Adrenal gland (tissue), 19 donors: ENCODE measurements at regions of chr2 and their contacts with region 1.

Region 1: GRCh38 chr2:218257390-218257981 is 3.3 kb upstream of the GPBAR1 start:
- DNase-seq: peak in 5 of 7 donors; percentile 40 to 73 (median 57)
- H3K4me3 ChIP-seq: no peak overlapping the region
- H3K27ac ChIP-seq: peak overlapping the region in 2 of 5 donors; percentile 7 to 41
- H3K4me1 ChIP-seq: peaks cover 4 to 20% of the 10 kb centered on the region in 2 donors
- H3K27me3 ChIP-seq: no peaks in the 10 kb centered on the region
- CTCF ChIP-seq: peak; percentile 41 to 77 (median 61)
- POLR2A ChIP-seq: no peak

Region 2: DNA sequence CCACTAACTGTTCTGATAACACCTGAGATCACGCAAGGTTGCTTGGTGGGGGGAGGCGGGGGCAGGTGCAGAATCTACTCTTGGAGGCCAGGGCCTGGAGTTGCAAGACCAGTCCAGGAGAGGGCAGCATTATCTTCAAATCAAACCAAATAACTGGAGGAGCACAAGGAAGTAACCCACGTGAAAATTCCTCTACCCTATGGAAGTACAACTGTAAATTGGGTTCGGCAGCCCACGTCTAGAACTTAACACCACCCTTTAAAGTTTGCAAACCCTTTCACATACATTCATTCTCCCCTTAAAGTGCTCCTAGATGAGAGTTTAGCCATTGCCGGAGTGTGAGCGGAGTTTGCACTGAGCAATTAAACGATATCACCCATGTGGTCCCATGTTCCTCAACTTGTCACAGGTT is 71.1 kb before region 1 on chr2:
- intact Hi-C with region 1: loop called (anchors 5 kb)
- DNase-seq: peak; percentile 56 to 86 (median 68)
- H3K4me3 ChIP-seq: no peak overlapping the region
- H3K27ac ChIP-seq: no peak overlapping the region
- H3K4me1 ChIP-seq: no peaks in the 10 kb centered on the region
- H3K27me3 ChIP-seq: no peaks in the 10 kb centered on the region
- CTCF ChIP-seq: peak; percentile 78 to 83 (median 82)
- POLR2A ChIP-seq: no peak